ENCODE measurements at regions of chr6 and their contacts with region 1.

Region 1: DNA sequence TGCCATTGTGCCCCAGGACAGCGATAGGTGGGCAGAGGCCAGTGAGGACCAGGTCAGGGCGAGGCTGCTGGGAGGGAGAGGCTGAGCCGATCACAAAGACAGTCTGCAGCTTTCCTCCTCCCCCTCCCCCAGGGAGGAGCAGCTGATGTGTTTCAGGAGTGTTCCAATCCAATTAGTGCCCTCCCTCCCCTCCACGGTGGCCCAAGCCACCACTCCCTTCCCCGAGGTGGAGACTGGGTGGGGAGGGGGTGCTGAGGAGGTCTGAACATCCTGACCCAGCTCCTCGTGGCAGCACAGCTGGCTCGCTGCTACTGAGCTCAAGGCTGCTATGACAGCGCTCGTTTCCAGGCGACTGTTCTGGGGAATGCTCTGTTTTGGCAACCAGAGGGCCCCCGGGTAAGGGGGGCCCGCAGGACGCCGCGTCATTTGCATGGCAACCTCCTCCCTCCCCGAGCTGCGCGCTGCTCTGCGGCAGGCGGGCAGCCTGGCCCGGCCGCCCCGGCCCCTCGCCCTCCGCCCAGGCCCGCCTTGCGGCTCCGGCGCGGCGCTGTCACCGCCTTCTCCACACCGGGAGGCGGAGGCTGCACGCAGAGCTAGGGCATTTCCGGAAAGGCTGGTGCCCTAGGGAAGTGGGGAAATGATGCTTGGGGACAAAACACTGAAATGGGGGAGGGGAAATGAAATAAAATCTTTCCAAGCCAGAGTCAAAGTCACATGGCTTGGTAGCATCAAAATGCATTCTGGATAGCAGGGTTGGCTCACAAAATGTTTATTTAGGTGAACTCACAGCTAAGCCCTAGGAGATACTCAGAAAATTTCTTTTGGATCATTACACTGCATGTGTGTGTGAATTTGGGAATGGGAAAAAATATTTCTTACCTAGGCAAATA is 67.4 kb upstream of the PIM1 start:
- DNase-seq: peak; percentile 92
- ATAC-seq: peak; percentile 82
- H3K4me3 ChIP-seq: peak overlapping the region; percentile 19 to 69 (median 54)
- H3K27ac ChIP-seq: peak overlapping the region; percentile 89
- H3K4me1 ChIP-seq: peaks cover 87% of the 10 kb centered on the region
- H3K27me3 ChIP-seq: no peaks in the 10 kb centered on the region
- CTCF ChIP-seq: peak; percentile 38; the same call in 1 of the 2 replicates
- EP300 ChIP-seq: peak; percentile 50 to 95; a peak in 3 of 4 replicates
- POLR2A ChIP-seq: peak; percentile 43 to 69; a peak in 2 of 4 replicates
- RAD21 ChIP-seq: peak; percentile 81

Region 2: DNA sequence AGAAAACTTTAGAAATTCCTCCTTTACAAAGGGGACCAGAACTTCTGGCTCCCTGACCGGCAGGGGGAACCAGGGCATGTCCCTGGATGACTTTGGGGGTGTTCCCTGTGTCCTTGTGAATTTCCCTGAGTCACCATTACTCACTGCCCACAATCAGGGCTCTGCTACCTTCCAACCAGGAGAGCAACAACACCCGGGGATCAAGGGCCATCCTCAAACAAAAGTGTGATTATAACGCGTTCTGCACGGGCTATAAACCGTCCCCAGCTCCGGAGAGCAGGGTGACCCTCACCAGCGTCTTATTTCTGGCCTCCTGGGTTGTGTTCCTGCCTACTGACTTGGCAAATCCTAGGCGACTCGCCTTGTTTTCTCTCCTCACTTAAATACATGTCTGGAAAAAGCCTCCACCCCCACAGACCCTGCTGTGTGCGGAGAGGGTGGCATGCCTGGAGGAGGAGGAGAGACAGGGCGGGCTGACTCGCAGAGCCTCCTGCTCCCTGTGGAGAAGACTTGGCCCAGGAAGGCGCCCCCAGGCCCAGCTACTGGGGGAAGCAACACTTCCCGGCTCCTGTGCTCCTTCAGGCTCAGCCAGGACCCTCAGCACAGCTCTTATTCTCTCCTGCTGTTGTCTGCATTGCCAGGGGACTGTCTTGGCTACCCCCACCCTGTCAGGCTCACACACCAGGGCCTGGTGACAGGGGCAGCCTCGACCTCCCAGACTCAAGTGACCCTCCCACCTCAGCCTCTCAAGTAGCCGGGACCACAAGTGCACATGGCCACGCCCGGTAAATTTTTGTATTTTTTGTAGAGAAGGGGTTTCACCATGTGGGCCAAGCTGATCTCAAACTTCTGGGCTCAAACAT is 42.9 kb before region 1 on chr6:
- CTCF ChIA-PET with region 1: interaction called, 3 read pairs
- POLR2A ChIA-PET with region 1: interaction called, 23 read pairs
- in situ Hi-C with region 1: loop called (anchors 5 kb)
- intact Hi-C with region 1: loop called (anchors 1 kb)
- DNase-seq: peak; percentile 99
- ATAC-seq: peak; percentile 91
- H3K4me3 ChIP-seq: peak overlapping the region; percentile 32 to 67 (median 44); a peak in 5 of 6 replicates
- H3K27ac ChIP-seq: peak overlapping the region; percentile 97
- H3K4me1 ChIP-seq: peaks cover 76% of the 10 kb centered on the region
- H3K27me3 ChIP-seq: no peaks in the 10 kb centered on the region
- CTCF ChIP-seq: peak; percentile 92
- EP300 ChIP-seq: peak; percentile 89 to 96; a peak in 3 of 4 replicates
- POLR2A ChIP-seq: peak in 1 of 2 experiments; percentile 85; a peak in 2 of 4 replicates
- RAD21 ChIP-seq: peak; percentile 96

Region 3: DNA sequence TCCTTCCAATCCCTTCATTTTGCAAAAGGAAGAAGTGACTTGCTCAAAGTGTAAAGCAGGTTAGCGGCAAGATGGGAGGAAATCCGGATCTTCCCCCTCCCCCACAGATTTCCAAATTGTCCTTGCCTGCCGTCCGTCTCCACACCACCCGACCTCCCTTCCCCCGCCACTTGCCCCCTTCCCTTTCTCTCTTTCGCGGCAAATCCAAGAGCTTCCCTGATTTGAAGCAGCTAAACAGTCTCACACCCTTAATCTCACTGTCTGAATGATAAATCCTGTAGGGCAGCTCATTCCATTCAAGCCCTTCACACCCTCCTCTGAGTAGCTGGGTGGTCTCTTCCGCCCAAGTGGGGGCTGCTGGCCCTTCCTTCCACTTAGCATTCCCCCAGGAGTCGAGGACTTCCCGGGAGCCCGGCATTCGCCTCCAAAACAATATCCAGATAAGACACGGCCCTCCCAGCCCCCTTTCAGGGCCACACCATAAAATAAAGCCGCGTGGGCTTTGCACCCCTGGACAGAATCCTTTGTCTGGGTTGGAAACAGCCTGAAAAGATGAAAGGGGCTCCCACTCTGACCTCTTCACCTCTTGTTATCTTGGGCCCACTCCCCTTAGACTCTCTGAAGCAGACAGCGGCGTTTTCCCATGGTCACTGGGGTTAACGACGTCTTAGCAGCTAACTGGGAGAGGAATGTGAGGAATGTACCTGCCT is 23.4 kb after region 1 on chr6:
- CTCF ChIA-PET with region 1: no interaction called
- POLR2A ChIA-PET with region 1: interaction called, 127 read pairs
- in situ Hi-C with region 1: no loop called
- intact Hi-C with region 1: loop called (anchors 1 kb)
- DNase-seq: peak; percentile 75
- ATAC-seq: no peak
- H3K4me3 ChIP-seq: peak overlapping the region in 2 of 3 experiments; percentile 13 to 35; a peak in 4 of 6 replicates
- H3K27ac ChIP-seq: peak overlapping the region; percentile 95
- H3K4me1 ChIP-seq: peaks cover 95% of the 10 kb centered on the region
- H3K27me3 ChIP-seq: no peaks in the 10 kb centered on the region
- CTCF ChIP-seq: no peak
- EP300 ChIP-seq: peak in 1 of 2 experiments; percentile 92; a peak in 2 of 4 replicates
- POLR2A ChIP-seq: no peak
- RAD21 ChIP-seq: no peak

Region 4: DNA sequence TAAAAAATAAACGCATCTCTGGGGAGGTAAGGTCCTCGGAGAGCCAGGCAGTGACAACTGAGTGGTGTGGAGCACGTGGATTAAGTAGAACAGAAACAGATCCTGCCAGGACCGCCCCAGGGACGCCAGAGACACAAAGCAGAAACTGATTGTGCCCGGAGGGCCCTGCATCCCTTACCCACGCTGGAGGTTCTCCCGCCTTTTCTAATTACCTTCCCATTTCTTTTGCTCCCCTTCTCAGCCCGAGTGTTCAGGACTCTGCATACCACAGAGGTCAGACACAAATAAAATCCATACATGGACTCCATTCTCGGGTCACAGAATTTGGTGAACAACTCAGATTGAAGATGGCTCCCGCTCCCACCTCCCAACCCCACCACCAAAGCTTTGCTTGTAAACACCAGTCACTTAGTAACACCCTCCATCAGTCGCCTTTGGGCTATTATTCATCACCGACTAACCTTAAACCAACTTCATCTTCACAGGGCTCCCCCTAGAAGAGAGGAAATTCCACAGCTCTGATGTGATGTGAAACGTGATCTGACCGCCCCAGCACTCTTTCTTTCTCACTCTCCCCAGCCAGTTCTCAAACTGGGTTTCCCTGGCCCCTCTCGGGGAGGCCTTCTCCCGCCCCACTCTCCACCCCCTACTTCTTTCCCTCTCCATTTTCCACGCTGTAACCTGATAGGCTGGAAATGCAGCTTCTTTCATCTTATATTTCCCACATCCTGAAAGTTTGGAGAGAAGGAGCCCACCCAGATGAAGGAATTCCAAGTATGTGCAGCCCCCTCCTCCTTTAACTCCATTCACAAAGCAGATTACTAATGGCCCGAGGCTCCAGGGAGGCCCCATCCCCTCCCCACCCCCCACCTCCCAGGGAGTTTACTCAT is 34.9 kb after region 1 on chr6:
- CTCF ChIA-PET with region 1: no interaction called
- POLR2A ChIA-PET with region 1: interaction called, 64 read pairs
- in situ Hi-C with region 1: no loop called
- intact Hi-C with region 1: no loop called
- DNase-seq: peak; percentile 93
- ATAC-seq: peak; percentile 81
- H3K4me3 ChIP-seq: peak overlapping the region; percentile 58 to 71 (median 62)
- H3K27ac ChIP-seq: peak overlapping the region; percentile 92
- H3K4me1 ChIP-seq: peaks cover 82% of the 10 kb centered on the region
- H3K27me3 ChIP-seq: no peaks in the 10 kb centered on the region
- CTCF ChIP-seq: peak; percentile 16; the same call in 1 of the 2 replicates
- EP300 ChIP-seq: peak in 1 of 2 experiments; percentile 27; a peak in 1 of 4 replicates
- POLR2A ChIP-seq: peak; percentile 44 to 49
- RAD21 ChIP-seq: no peak

Measured in HepG2 (cell line).